MCF 10A (cell line): ENCODE measurements at regions of chr1 and their contacts with region 1.

Region 1: GRCh38 chr1:26853156-26853555 is 9.8 kb upstream of the SFN start:
- DNase-seq: peak; percentile 94
- H3K4me3 Mint-ChIP-seq: no peak overlapping the region
- H3K27ac Mint-ChIP-seq: no peak overlapping the region
- H3K4me1 Mint-ChIP-seq: peaks cover 30% of the 10 kb centered on the region
- H3K27me3 Mint-ChIP-seq: no peaks in the 10 kb centered on the region
- CTCF ChIP-seq: peak; percentile 81

Region 2: DNA sequence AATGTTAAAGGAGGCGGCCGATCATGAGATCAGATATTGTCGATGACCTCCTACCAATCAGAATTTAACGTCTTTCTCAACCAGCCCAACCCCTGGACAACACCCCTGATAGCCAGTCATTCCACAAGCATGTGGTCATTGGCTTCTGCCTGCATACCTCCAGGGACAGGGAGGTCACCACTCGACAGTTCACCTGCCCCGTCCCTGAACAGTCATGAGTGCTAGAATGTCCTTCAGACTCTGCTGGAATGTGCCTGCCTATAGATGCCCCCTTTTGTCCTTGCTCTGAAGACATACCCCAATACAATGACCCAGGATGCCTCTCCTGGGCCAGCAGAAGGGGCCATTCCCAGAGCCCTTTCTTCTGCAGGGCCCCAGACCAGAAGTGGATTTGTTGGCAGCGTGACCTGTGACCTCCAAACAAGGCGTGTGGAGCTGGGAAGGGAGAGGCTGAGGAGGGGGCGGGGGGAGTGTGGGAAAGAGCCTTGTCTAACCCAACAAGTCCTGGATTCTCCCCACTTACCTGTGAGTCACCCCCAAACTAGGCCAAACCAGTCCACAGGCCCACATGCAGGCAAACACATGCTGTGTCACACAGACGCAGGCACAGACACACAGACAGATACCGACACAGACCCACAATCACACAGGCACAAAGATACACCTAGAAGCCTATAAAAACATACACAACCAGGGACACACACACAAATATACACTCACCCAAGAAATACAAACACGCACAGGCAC is 501.4 kb before region 1 on chr1:
- CTCF ChIA-PET with region 1: no interaction called
- POLR2A ChIA-PET with region 1: no interaction called
- intact Hi-C with region 1: no loop called
- DNase-seq: peak; percentile 71
- H3K4me3 Mint-ChIP-seq: no peak overlapping the region
- H3K27ac Mint-ChIP-seq: peak overlapping the region; percentile 44
- H3K4me1 Mint-ChIP-seq: peaks cover 33% of the 10 kb centered on the region
- H3K27me3 Mint-ChIP-seq: no peaks in the 10 kb centered on the region
- CTCF ChIP-seq: no peak

Region 3: GRCh38 chr1:26889551-26890466 is 36.7 kb after region 1 on chr1 and contains the start of gene GPN2:
- CTCF ChIA-PET with region 1: interaction called, 18 read pairs
- POLR2A ChIA-PET with region 1: interaction called, 50 read pairs
- intact Hi-C with region 1: loop called (anchors 2 kb)
- DNase-seq: peak; percentile 75
- H3K4me3 Mint-ChIP-seq: peak within 1 kb of the TSS; percentile 91
- H3K27ac Mint-ChIP-seq: peak within 1 kb of the TSS; percentile 93
- H3K4me1 Mint-ChIP-seq: peaks cover 23% of the 10 kb centered on the region
- H3K27me3 Mint-ChIP-seq: no peaks in the 10 kb centered on the region
- CTCF ChIP-seq: no peak
- total RNA-seq, gene GPN2: 38.9 and 39.7 TPM in 2 replicates